Heart right ventricle (tissue), 16 donors: ENCODE measurements at regions of chr5 and their contacts with region 1.

Region 1: DNA sequence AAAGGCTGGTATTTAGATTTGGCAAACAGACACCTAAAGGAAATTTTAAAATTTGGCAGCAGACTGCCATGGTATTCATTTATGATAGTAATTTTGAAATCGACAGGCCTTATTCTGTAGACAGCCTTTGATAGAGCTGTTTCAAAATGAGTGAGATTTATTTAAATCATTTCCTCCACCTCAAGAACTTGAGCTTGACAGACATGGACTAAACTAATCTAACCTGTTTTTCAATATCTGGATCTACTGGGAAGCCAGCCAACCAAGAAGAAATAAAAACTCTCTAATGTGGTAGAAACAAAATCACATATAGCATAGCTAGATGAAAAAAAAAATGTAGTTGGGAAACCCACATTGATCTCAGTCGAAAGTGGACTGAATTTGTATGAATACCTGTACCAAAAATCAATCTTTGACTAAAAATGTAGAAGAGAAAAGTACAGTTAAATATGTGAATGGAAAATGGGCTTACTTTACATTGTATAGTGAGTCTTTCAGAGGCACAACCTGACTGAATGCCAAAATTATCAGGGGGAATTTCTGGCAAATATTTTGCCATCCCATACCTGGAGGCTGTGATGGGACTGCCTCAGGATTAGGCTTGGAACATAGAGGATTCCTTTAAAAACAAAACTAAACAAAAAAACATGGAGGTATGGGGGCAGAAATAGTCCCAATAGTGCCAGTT is 56.8 kb upstream of the RASA1 start:
- DNase-seq: no peak
- ATAC-seq: no peak
- H3K4me3 ChIP-seq: no peak overlapping the region
- H3K27ac ChIP-seq: no peak overlapping the region
- H3K4me1 ChIP-seq: no peaks in the 10 kb centered on the region
- H3K27me3 ChIP-seq: no peaks in the 10 kb centered on the region
- CTCF ChIP-seq: no peak

Region 2: GRCh38 chr5:87169300-87169991 is 41.4 kb before region 1 on chr5:
- intact Hi-C with region 1: no loop called
- DNase-seq: no peak
- ATAC-seq: no peak
- H3K4me3 ChIP-seq: no peak overlapping the region
- H3K27ac ChIP-seq: no peak overlapping the region
- H3K4me1 ChIP-seq: no peaks in the 10 kb centered on the region
- H3K27me3 ChIP-seq: no peaks in the 10 kb centered on the region
- CTCF ChIP-seq: no peak

Region 3: DNA sequence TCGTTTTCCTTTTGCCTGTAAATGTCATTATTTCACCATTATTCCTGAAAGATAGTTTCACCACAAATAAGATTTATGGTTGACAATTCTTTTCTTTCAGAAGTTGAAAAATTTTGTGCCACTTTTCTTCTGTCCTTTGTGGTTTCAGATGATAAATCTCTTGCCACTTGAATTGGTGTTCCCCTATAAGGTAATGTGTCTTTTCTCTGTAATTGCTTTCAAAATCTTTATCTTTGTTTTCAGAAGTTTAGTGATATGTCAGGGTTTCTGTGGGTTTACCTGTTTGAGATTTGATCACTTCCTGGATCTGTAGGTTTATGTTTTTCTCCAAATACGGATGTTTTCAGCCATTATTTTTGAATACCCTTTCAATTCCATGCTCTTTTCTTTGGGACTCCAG is 71.4 kb after region 1 on chr5:
- intact Hi-C with region 1: loop called in 1 of 10 experiments (anchors 2 kb)
- DNase-seq: no peak
- ATAC-seq: no peak
- H3K4me3 ChIP-seq: no peak overlapping the region
- H3K27ac ChIP-seq: no peak overlapping the region
- H3K4me1 ChIP-seq: peaks cover 0 to 22% (median 6%) of the 10 kb centered on the region in 9 donors
- H3K27me3 ChIP-seq: no peaks in the 10 kb centered on the region
- CTCF ChIP-seq: no peak